PC-3 (cell line): ENCODE measurements at regions of chr13 and their contacts with region 1.

Region 1: DNA sequence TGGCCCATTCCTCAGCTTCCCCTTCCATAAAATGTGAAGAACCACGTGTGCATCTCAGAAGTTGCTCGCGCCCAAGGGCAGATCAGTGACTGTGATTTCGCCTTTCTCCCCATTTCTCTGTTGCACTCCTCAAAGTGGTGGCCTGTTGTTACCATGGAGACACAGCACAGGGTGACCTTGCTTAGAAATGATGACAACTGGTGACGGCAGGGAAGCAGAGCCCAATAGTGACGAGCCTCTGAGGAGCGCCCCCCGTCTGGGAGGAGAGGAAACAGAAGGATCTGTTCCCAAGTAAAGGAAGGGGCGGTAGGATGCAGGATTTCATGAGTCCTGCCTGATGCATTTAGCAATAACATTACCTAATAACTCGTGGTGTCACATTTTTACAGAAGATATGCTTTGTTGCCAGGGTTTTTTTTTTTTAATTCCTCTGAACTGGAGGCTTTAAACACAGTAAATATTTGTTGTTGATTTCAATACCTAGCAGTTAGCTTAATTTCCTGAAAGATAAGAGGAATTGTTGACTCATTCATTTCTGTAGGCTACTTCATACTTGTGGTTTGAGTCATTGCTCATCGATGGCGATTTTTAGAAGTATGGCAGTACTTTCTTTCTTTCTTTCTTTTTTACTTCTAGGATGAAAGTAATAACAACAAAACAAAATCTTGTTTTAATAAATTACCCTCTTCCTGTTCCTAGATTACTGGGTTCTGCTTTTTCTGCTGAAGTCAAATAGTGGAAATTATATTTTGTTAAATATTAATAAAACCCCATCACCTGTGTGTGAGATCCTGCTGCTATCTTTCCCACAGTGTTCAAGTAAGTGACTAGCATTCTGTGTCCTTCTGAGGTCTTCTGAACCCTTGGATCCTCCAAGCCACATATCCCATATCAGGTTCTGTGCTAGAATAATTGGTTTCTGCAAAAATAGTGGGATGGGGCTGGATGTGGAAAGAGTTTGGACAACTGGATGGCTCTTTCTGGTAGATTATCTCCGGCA is 36.0 kb downstream of the MBNL2 start:
- DNase-seq: peak; percentile 82
- ATAC-seq: peak; percentile 50
- H3K4me3 ChIP-seq: peak overlapping the region; percentile 28; the same call in 1 of the 2 replicates
- H3K27ac ChIP-seq: peak overlapping the region; percentile 93
- H3K4me1 ChIP-seq: peaks cover 67% of the 10 kb centered on the region
- H3K27me3 ChIP-seq: no peaks in the 10 kb centered on the region
- CTCF ChIP-seq: peak; percentile 39

Region 2: DNA sequence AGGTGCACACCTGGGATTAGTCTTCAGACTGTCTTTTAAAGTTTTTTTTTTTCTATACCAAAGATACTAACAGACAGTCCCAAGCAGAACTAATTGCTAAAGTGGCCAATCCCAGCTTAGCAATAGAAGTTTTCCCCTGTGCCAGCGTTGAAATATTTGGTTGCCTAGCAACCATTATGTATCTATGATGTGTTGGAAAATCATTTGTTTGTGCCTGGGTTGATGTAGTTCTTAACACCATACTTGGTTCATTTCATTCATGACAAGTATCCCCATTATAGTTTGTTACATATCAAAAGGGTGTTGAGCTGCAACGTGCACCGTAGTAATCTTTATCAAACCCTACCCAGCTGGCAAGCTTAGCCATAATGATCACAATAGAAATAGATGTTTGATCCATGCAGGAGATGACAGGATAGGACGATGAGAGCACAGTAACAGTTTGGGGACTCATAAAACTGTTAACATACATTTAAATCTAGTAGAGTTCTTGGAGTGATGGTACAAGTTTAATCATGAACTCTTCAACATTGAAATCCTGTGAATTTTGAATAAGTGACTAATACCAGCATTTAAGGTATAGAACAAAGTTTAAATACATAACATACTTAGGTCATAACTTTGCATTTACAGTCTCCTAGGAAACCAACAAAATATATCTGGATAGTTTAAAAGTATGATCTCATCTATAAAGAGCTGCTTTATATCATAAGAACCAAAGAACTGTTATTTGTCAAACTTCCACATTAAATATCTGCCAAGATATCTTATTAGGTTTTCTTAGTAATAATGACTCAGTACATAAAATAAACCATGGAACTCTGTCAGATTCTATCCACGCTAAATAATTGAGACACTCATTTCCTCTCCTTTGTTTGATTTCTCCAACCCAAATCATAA is 37.4 kb after region 1 on chr13:
- CTCF ChIA-PET with region 1: no interaction called
- POLR2A ChIA-PET with region 1: no interaction called
- intact Hi-C with region 1: loop called (anchors 1 kb)
- DNase-seq: peak; percentile 92
- ATAC-seq: peak; percentile 85
- H3K4me3 ChIP-seq: peak overlapping the region; percentile 36; the same call in 1 of the 2 replicates
- H3K27ac ChIP-seq: peak overlapping the region; percentile 99
- H3K4me1 ChIP-seq: peaks cover 32% of the 10 kb centered on the region
- H3K27me3 ChIP-seq: no peaks in the 10 kb centered on the region
- CTCF ChIP-seq: no peak

Region 3: GRCh38 chr13:97904059-97904458 is 646.0 kb after region 1 on chr13:
- CTCF ChIA-PET with region 1: no interaction called
- POLR2A ChIA-PET with region 1: no interaction called
- intact Hi-C with region 1: no loop called
- DNase-seq: no peak
- ATAC-seq: no peak
- H3K4me3 ChIP-seq: no peak overlapping the region
- H3K27ac ChIP-seq: no peak overlapping the region
- H3K4me1 ChIP-seq: no peaks in the 10 kb centered on the region
- H3K27me3 ChIP-seq: no peaks in the 10 kb centered on the region
- CTCF ChIP-seq: no peak